Common myeloid progenitor, CD34-positive (primary cell): ENCODE measurements at regions of chr14 and their contacts with region 1.

Region 1: DNA sequence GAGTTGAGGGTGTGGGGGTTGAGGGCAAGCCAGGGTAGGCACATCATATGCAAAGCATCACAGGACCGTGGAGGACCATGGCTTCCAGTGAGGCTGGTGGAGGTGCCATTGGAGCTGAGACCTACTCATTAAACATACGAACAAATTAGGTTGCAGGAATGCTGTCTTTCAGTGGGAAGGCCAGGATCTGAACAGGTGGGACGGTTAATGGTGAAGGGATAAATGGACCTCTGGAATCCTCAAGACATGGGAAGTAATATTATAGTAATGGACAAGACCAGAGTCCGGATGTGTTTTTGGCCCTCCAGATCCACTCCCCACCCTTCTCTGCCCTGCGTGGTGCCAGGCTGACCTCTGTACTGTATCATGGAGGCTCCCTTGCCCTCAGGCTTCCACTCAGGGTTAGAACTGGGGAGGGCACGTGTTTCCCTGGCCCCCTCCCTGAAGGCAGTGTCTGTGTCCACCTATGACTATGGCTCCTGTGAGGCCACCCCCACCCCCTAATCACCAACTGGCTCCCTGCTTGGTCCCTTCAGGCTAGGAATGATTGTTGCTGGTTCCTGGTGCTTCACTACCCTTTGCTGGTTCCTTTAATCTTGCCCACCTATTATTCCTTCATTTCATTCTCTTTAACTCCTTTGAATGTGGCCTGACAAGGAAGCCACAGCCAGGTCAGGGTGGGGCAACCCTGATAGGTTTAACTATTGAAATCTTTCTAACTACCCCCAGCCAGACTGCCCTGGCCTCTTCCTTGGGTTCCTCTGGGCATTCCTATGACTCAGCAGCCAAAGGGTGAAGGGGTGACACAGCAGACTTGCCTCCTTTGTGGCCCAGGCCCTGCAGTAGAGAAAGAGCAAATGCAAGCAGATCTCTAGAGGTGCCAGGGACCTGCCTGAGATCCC is 10.7 kb downstream of the DHRS2 start:
- DNase-seq: peak; percentile 19 to 62 (median 44)
- H3K4me3 ChIP-seq: no peak overlapping the region
- H3K27ac ChIP-seq: no peak overlapping the region
- H3K4me1 ChIP-seq: peaks cover 0 to 20% (median 3%) of the 10 kb centered on the region in 4 experiments
- H3K27me3 ChIP-seq: peaks cover 0 to 2% (median 0%) of the 10 kb centered on the region in 5 experiments

Region 2: GRCh38 chr14:23528555-23528954 is 118.3 kb before region 1 on chr14:
- CTCF ChIA-PET with region 1: no interaction called
- POLR2A ChIA-PET with region 1: no interaction called
- DNase-seq: no peak
- H3K4me3 ChIP-seq: no peak overlapping the region
- H3K27ac ChIP-seq: no peak overlapping the region
- H3K4me1 ChIP-seq: peaks cover 0 to 19% (median 14%) of the 10 kb centered on the region in 4 experiments
- H3K27me3 ChIP-seq: no peaks in the 10 kb centered on the region

Region 3: DNA sequence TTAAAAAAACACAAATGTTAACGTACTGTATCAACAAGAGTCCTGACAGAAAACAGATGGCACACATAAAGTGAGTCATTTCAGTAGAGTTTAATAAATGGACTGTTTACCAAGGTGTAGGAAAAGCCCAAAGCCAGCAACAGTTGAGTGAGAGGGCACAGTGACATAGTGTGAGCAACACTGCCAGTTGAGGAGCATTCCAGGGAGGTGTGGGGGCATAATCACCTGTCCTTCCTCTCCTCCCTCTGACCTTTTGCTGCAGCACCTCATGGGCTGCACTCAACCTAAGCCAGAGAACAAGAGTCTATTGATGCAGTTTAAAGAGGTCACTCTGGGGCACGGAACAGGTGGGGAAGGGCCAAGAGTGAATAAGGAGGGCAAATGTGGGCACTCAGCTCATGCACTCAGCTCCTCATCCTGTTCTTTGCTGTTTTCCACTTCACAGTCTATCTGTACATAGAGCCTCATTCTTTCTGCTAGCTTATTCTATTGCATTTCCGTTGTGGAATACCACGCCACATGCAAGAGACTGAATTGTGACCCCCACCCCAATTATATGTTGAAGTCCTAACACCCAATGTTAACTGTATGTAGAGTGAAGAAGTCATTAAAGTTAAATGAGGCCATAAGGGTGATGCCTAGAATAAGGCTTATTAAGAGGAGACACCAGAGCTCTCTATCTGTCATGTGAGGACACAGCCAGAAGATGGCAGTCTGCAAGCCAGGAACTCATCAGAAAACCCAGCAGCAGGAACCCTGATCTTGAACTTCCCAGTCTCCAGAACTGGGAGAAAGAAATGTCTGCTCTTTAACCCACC is 18.7 kb after region 1 on chr14:
- CTCF ChIA-PET with region 1: interaction called, 13 read pairs
- POLR2A ChIA-PET with region 1: no interaction called
- DNase-seq: peak; percentile 47 to 70 (median 54)
- H3K4me3 ChIP-seq: no peak overlapping the region
- H3K27ac ChIP-seq: no peak overlapping the region
- H3K4me1 ChIP-seq: no peaks in the 10 kb centered on the region
- H3K27me3 ChIP-seq: peaks cover 0 to 4% (median 0%) of the 10 kb centered on the region in 5 experiments

Region 4: DNA sequence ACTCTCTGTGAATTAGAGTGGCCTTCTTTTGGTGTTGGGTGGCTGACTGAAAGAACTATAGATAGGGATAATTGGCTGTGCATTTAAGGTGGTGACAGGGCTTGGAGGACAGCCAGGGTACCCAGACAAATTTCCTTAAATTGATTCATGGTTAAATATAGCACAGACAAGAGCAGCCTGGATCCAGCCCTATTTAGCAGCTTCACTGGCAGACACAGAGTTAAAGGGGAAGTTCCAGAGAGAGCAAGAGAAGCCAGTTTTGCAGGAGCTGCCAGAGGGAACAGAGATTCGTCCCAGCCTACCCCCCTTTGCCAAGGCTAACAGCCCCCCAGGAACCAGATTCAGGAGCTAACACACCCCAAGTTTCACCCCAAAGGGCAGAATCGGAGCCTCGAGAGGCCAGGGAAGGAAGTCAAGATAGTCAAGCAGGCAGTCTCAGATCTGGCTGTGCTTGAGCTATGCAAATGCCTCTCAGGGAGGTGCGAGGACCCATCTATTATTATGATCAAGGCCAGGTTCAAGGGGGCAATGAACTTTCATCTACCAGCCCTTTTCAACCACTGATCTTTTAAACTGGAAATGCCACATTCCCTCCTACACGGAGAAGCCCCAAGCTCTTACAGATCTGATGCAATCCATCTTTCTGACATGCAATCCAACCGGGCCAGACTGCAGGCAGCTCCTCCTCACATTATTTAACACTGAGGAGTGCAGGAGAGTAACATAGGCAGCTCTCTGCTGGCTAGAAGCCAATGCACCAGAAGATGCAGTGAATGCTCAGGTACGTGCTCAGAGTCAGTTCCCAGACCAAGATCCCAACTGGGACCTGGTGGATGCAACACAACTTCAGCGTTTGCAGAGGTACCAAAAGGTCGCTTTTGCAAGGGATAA is 47.4 kb after region 1 on chr14:
- CTCF ChIA-PET with region 1: no interaction called
- POLR2A ChIA-PET with region 1: no interaction called
- DNase-seq: peak in 2 of 3 donors; percentile 6 to 7
- H3K4me3 ChIP-seq: peak overlapping the region in 1 of 7 experiments; percentile 71
- H3K27ac ChIP-seq: no peak overlapping the region
- H3K4me1 ChIP-seq: peaks cover 8 to 43% (median 28%) of the 10 kb centered on the region in 4 experiments
- H3K27me3 ChIP-seq: no peaks in the 10 kb centered on the region

Region 5: GRCh38 chr14:23719225-23719946 is 72.5 kb after region 1 on chr14:
- CTCF ChIA-PET with region 1: no interaction called
- POLR2A ChIA-PET with region 1: no interaction called
- DNase-seq: no peak
- H3K4me3 ChIP-seq: no peak overlapping the region
- H3K27ac ChIP-seq: no peak overlapping the region
- H3K4me1 ChIP-seq: no peaks in the 10 kb centered on the region
- H3K27me3 ChIP-seq: no peaks in the 10 kb centered on the region

Region 6: GRCh38 chr14:23766737-23767401 is 120.0 kb after region 1 on chr14:
- CTCF ChIA-PET with region 1: no interaction called
- POLR2A ChIA-PET with region 1: no interaction called
- DNase-seq: no peak
- H3K4me3 ChIP-seq: no peak overlapping the region
- H3K27ac ChIP-seq: no peak overlapping the region
- H3K4me1 ChIP-seq: no peaks in the 10 kb centered on the region
- H3K27me3 ChIP-seq: no peaks in the 10 kb centered on the region